Left cardiac atrium (tissue), 4 donors: ENCODE measurements at regions of chr5 and their contacts with region 1.

Region 1: GRCh38 chr5:157253547-157253946 is 12.4 kb upstream of the CYFIP2 start:
- DNase-seq: no peak
- ATAC-seq: peak; percentile 81 to 86

Region 2: GRCh38 chr5:157148734-157149615 is 104.6 kb before region 1 on chr5:
- intact Hi-C with region 1: loop called (anchors 5 to 10 kb)
- DNase-seq: peak; percentile 57
- ATAC-seq: peak; percentile 85 to 87

Region 3: GRCh38 chr5:157159209-157159751 is 94.3 kb before region 1 on chr5:
- intact Hi-C with region 1: loop called in 1 of 2 experiments (anchors 10 kb)
- DNase-seq: no peak
- ATAC-seq: no peak

Region 4: DNA sequence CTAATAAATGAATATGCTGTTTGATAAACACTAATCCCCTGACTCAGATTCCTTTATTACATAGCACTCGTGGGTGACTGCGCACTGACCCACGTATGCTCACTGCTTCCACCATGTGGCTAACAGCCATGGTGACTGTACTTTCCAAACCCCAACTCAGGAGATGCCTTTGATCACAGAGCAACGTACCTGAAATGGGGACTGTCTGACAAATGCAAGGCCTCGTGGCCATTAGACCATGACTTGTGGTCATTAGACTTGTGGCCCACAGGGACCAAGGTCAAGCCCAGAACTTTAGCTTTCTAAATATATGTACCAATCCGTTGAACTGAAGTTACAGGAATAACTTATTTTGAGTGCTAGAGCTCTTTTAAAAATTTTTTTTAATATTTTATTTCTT is 58.9 kb after region 1 on chr5:
- intact Hi-C with region 1: loop called (anchors 1 to 5 kb)
- DNase-seq: peak; percentile 34
- ATAC-seq: peak; percentile 62 to 83